ENCODE measurements at regions of chr17 and their contacts with region 1.

Region 1: GRCh38 chr17:46139432-46140210 is 53.6 kb downstream of the KANSL1 start:
- DNase-seq: no peak
- ATAC-seq: no peak
- H3K4me3 ChIP-seq: no peak overlapping the region
- H3K27ac ChIP-seq: no peak overlapping the region
- H3K4me1 ChIP-seq: peaks cover 6 to 7% of the 10 kb centered on the region in 2 donors
- H3K27me3 ChIP-seq: no peaks in the 10 kb centered on the region

Region 2: GRCh38 chr17:46182961-46183360 is 43.3 kb after region 1 on chr17:
- intact Hi-C with region 1: loop called in 1 of 2 experiments (anchors 10 kb)
- DNase-seq: no peak
- ATAC-seq: no peak
- H3K4me3 ChIP-seq: no peak overlapping the region
- H3K27ac ChIP-seq: no peak overlapping the region
- H3K4me1 ChIP-seq: peaks cover 0 to 2% of the 10 kb centered on the region in 2 donors
- H3K27me3 ChIP-seq: no peaks in the 10 kb centered on the region